ENCODE measurements at regions of chr1 and their contacts with region 1.

Region 1: GRCh38 chr1:48498096-48498791 is 26.2 kb upstream of the SPATA6 start:
- DNase-seq: peak; percentile 48
- H3K4me3 ChIP-seq: no peak overlapping the region
- H3K27ac ChIP-seq: no peak overlapping the region
- H3K27me3 ChIP-seq: no peaks in the 10 kb centered on the region
- CTCF ChIP-seq: peak; percentile 98

Region 2: GRCh38 chr1:48333316-48333715 is 164.9 kb before region 1 on chr1:
- CTCF ChIA-PET with region 1: interaction called, 11 read pairs
- POLR2A ChIA-PET with region 1: no interaction called
- DNase-seq: peak; percentile 15
- H3K4me3 ChIP-seq: no peak overlapping the region
- H3K27ac ChIP-seq: no peak overlapping the region
- H3K27me3 ChIP-seq: no peaks in the 10 kb centered on the region
- CTCF ChIP-seq: no peak

Region 3: GRCh38 chr1:48414264-48414663 is 84.0 kb before region 1 on chr1:
- CTCF ChIA-PET with region 1: interaction called, 12 read pairs
- POLR2A ChIA-PET with region 1: no interaction called
- DNase-seq: no peak
- H3K4me3 ChIP-seq: no peak overlapping the region
- H3K27ac ChIP-seq: peak overlapping the region; percentile 35
- H3K27me3 ChIP-seq: no peaks in the 10 kb centered on the region
- CTCF ChIP-seq: no peak

Region 4: GRCh38 chr1:48471691-48472576 is 26.3 kb before region 1 on chr1 and contains the start of gene SPATA6:
- CTCF ChIA-PET with region 1: interaction called, 27 read pairs
- POLR2A ChIA-PET with region 1: interaction called, 11 read pairs
- DNase-seq: peak; percentile 89
- H3K4me3 ChIP-seq: peak within 1 kb of the TSS; percentile 77
- H3K27ac ChIP-seq: peak within 1 kb of the TSS; percentile 43
- H3K27me3 ChIP-seq: no peaks in the 10 kb centered on the region
- CTCF ChIP-seq: no peak
- polyA plus RNA-seq, gene SPATA6: 4.6 and 6.1 TPM in 2 replicates

Region 5: DNA sequence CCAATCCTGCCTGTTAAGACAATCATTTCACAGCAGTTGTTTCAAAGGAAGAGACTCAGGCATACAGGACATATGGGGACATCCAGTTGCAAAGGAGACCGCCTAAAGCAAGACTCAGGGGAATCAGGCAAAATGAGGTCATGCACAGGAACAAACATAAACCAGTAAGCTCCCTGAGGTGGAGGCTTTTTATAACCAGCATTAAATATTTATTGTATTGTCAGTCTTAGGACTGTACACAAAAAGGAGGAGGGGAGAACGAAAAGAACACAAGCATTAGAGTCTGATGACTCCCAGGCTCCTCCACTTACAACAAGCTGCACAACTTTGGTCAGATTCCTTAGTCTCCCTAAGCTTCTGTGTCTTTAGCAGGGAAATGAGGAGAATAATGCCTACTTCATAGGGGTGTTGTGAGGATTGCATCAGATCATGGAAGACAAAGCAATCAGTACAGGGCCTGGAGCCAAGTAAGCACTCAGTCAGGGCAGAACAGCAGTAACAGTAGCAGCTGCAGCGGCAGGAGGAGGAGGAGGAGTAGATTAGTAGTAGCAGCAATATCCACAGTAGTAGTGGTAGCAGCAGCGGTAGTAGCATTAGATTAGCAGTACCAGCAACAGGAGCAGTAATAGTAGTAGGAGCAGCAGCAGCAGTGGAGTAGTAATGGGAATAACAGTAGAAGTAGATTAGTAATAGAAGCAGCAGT is 27.9 kb after region 1 on chr1:
- CTCF ChIA-PET with region 1: interaction called, 13 read pairs
- POLR2A ChIA-PET with region 1: no interaction called
- DNase-seq: no peak
- H3K4me3 ChIP-seq: no peak overlapping the region
- H3K27ac ChIP-seq: no peak overlapping the region
- H3K27me3 ChIP-seq: no peaks in the 10 kb centered on the region
- CTCF ChIP-seq: no peak

Region 6: GRCh38 chr1:48677306-48678287 is 179.4 kb after region 1 on chr1:
- CTCF ChIA-PET with region 1: no interaction called
- POLR2A ChIA-PET with region 1: no interaction called
- DNase-seq: no peak
- H3K4me3 ChIP-seq: no peak overlapping the region
- H3K27ac ChIP-seq: no peak overlapping the region
- H3K27me3 ChIP-seq: no peaks in the 10 kb centered on the region
- CTCF ChIP-seq: peak; percentile 62

Measured in AG04450 (cell line).